ENCODE measurements at regions of chr10 and their contacts with region 1.

Region 1: GRCh38 chr10:93680412-93681047 is 21.9 kb downstream of the FRA10AC1 start:
- DNase-seq: peak; percentile 56
- ATAC-seq: peak; percentile 93
- H3K4me3 ChIP-seq: no peak overlapping the region
- H3K27ac ChIP-seq: no peak overlapping the region
- H3K4me1 ChIP-seq: no peaks in the 10 kb centered on the region
- H3K27me3 ChIP-seq: no peaks in the 10 kb centered on the region
- CTCF ChIP-seq: peak; percentile 59; the same call in 1 of the 2 replicates

Region 2: GRCh38 chr10:93554760-93555432 is 125.6 kb before region 1 on chr10:
- CTCF ChIA-PET with region 1: interaction called, 24 read pairs
- POLR2A ChIA-PET with region 1: no interaction called
- in situ Hi-C with region 1: no loop called
- intact Hi-C with region 1: loop called (anchors 1 kb)
- DNase-seq: peak; percentile 53
- ATAC-seq: peak; percentile 96
- H3K4me3 ChIP-seq: no peak overlapping the region
- H3K27ac ChIP-seq: no peak overlapping the region
- H3K4me1 ChIP-seq: no peaks in the 10 kb centered on the region
- H3K27me3 ChIP-seq: no peaks in the 10 kb centered on the region
- CTCF ChIP-seq: peak; percentile 91